ENCODE measurements at regions of chr16 and their contacts with region 1.

Region 1: DNA sequence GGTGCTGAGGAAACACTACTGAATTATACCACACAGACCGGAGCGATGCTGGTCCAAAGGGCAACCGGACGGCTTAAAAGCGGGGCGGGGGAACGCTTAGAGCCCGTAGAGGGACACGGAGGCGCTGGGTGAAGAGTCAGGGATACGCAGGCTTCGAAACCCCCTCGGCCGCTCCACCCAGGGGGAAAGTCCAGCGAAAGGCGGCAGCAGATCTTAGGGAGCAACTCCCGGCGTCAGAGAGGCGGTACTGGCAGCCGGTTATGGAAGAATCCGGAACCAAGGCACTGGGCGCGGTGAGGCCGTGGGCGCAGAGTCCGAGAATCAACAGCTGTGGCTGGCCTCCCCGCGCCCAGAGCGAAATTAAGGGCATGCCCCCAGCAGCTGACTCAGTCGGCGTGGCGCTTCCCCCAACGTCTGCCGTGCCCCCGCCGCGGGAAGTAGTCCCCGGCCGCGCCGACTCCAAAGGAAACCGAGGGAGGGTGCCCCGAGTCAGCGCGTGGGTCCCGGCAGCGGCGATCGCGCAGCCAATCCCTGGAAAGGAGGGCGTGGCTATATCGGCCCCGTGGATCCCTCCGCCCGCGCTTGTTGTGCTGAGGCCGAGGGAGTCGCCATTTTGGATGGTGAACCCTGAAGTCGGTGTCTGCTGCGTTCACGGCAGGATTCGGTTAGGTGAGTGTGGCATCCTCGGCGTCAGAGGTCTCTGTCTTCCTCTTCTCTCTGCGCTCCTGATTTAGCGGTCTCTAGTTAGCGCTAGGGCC is at the start of gene IST1:
- DNase-seq: peak; percentile 99
- H3K4me3 Mint-ChIP-seq: peak within 1 kb of the TSS; percentile 82
- H3K27ac Mint-ChIP-seq: peak within 1 kb of the TSS; percentile 85
- H3K4me1 Mint-ChIP-seq: peaks cover 12% of the 10 kb centered on the region
- H3K27me3 Mint-ChIP-seq: no peaks in the 10 kb centered on the region
- CTCF ChIP-seq: no peak
- total RNA-seq, gene IST1: 252 and 269 TPM in 2 replicates

Region 2: DNA sequence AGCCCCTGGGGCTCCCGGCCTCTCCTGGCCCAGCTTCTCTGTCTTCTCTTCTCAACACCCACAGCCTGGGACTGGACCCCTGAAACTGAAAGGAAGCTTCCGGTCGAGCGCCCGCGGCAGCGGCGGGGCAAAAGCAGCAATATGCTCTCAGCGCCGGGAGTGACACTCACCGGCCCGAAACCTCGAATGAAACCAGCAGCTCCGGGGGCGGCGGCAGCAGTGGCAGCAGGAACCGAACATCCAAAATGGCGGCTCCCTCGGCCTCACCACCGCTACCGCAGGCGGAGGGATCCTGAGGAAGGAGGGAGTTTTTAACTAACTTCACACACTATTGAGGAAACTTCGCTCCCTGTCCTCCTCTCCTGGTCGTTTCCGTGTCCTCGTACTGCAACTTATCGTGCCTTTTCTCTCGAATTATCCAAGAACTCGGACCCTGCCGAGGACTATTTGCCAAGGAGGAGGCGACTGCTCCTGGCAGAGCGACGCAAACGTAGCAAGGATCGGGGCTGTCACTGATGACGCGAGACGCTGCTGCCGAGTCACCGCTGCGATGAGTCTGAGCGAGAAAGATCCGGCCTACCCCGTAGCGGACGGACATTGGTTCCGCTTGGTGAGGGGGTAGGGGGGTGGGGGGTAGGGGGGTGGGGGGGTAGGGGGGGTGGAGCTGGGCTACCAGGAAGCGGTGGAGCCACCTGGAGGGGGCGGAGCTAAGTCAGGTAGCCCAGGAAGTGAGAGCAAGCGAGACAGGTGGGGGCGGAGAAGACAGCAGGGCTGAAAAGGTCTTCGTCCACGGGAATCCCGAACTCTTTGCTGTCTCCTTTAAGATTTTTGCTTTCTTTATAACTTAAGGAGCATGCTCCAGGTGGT is 86.3 kb before region 1 on chr16 and contains the start of gene AP1G1:
- CTCF ChIA-PET with region 1: interaction called, 3 read pairs
- intact Hi-C with region 1: loop called (anchors 10 kb)
- DNase-seq: peak; percentile 95
- H3K4me3 Mint-ChIP-seq: peak within 1 kb of the TSS; percentile 90
- H3K27ac Mint-ChIP-seq: peak within 1 kb of the TSS; percentile 97
- H3K4me1 Mint-ChIP-seq: no peaks in the 10 kb centered on the region
- H3K27me3 Mint-ChIP-seq: no peaks in the 10 kb centered on the region
- CTCF ChIP-seq: no peak
- total RNA-seq, gene AP1G1: 144 and 152 TPM in 2 replicates

Region 3: DNA sequence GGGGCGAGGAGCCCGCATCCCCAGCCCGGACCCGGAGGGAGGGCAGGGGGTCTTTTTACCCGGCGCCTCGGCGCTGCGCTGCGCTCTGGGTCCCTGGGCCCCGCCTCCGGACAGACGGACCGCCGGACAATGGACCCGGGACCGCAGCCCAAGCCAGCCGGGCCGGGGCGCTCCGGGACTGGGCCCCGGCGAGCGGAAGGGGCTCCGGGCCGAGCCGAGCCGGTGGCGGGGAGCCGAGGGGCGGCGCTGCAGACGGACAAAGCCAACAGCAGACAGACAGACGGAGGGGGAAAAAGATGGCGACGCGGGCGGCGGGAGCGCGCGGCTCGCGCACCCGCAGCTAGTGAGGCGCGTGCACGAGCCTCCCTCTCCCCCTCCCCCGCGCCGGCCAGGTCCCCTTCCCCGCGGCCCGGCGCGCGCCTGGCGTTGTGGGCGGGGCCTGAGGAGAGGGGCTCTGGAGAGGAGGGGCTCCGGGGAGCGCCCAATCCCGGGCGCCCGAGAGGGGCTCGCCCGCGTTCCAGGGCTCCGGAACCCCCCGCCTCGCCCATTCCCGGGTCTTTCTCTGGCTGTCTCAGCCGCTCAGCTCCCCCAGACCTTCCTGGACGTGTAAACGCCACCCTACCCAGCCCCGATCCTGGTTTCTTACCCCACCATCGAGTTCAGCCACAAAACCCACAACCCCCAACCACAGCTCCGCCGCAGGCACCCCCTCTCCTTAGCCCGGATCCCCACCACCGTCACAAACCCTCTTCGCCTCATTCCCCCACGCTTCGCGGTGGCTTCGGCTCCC is 11.1 kb before region 1 on chr16 and contains the start of gene ZNF821:
- CTCF ChIA-PET with region 1: interaction called, 15 read pairs
- intact Hi-C with region 1: no loop called
- DNase-seq: peak; percentile 90
- H3K4me3 Mint-ChIP-seq: peak within 1 kb of the TSS; percentile 96
- H3K27ac Mint-ChIP-seq: peak within 1 kb of the TSS; percentile 87
- H3K4me1 Mint-ChIP-seq: peaks cover 22% of the 10 kb centered on the region
- H3K27me3 Mint-ChIP-seq: no peaks in the 10 kb centered on the region
- CTCF ChIP-seq: peak; percentile 75
- total RNA-seq, gene ZNF821: 12.3 and 13.1 TPM in 2 replicates

Region 4: DNA sequence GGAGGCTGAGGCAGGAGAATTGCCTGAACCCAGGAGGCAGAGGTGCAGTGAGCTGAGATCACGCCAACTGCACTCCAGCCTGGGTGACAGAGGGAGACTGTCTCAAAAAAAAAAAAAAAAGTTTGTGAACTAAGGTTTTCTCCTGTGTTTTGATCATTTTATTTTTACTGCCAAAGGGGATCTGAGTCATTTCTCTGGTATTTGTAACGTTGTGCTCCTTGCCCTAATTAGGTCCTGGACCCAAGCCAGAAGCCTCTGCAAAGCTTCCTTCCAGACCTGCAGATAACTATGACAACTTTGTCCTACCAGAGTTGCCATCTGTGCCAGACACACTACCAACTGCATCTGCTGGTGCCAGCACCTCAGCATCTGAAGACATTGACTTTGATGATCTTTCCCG is 32.3 kb after region 1 on chr16:
- CTCF ChIA-PET with region 1: no interaction called
- intact Hi-C with region 1: loop called (anchors 2 kb)
- DNase-seq: peak; percentile 74
- H3K4me3 Mint-ChIP-seq: no peak overlapping the region
- H3K27ac Mint-ChIP-seq: peak overlapping the region; percentile 35
- H3K4me1 Mint-ChIP-seq: peaks cover 37% of the 10 kb centered on the region
- H3K27me3 Mint-ChIP-seq: no peaks in the 10 kb centered on the region
- CTCF ChIP-seq: no peak

Measured in Calu3 (cell line).